ENCODE measurements at regions of chr13 and their contacts with region 1.

Region 1: DNA sequence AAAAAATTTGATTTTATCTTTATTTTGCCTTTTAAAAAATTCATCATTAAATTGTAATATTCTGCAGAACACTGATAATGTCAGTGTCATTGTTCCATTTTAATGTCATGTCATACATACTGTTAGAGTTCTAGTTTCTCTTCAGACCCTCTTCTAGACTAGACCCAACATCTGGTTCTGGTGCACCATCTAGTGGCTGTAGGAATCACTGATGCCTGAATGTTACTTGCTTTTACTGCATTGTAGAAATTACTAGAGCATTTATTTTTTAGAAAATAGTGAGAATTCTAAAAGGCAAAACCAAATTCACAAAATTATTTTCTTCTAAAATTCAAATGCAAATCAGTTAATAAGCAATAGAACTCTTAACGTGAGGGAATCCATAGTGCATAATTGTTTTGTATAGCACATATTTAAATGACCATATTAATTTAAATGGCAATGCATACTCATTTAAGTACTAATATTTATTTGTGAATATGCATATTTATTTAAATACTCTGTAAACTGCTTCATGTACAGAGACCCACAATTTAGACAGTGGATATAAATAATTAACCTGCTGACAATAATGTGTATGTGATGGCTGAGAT is 425.7 kb downstream of the KLF12 start:
- DNase-seq: no peak
- H3K4me3 ChIP-seq: no peak overlapping the region
- H3K27ac ChIP-seq: no peak overlapping the region
- H3K4me1 ChIP-seq: no peaks in the 10 kb centered on the region
- H3K27me3 ChIP-seq: no peaks in the 10 kb centered on the region
- CTCF ChIP-seq: peak; percentile 36 to 78 (median 47)

Region 2: GRCh38 chr13:72808917-72809500 is 899.5 kb before region 1 on chr13:
- intact Hi-C with region 1: loop called (anchors 10 kb)
- DNase-seq: no peak
- H3K4me3 ChIP-seq: no peak overlapping the region
- H3K27ac ChIP-seq: no peak overlapping the region
- H3K4me1 ChIP-seq: no peaks in the 10 kb centered on the region
- H3K27me3 ChIP-seq: no peaks in the 10 kb centered on the region
- CTCF ChIP-seq: peak in 2 of 3 experiments; percentile 53 to 59

Measured in ascending aorta (tissue), 2 donors.